ENCODE measurements at regions of chr1 and their contacts with region 1.

Region 1: GRCh38 chr1:113978863-113979702 is at the start of gene OLFML3:
- H3K4me3 Mint-ChIP-seq: peak within 1 kb of the TSS; percentile 63
- H3K27ac Mint-ChIP-seq: peak within 1 kb of the TSS; percentile 67
- H3K4me1 Mint-ChIP-seq: peaks cover 76% of the 10 kb centered on the region
- H3K27me3 Mint-ChIP-seq: peaks cover 7% of the 10 kb centered on the region

Region 2: DNA sequence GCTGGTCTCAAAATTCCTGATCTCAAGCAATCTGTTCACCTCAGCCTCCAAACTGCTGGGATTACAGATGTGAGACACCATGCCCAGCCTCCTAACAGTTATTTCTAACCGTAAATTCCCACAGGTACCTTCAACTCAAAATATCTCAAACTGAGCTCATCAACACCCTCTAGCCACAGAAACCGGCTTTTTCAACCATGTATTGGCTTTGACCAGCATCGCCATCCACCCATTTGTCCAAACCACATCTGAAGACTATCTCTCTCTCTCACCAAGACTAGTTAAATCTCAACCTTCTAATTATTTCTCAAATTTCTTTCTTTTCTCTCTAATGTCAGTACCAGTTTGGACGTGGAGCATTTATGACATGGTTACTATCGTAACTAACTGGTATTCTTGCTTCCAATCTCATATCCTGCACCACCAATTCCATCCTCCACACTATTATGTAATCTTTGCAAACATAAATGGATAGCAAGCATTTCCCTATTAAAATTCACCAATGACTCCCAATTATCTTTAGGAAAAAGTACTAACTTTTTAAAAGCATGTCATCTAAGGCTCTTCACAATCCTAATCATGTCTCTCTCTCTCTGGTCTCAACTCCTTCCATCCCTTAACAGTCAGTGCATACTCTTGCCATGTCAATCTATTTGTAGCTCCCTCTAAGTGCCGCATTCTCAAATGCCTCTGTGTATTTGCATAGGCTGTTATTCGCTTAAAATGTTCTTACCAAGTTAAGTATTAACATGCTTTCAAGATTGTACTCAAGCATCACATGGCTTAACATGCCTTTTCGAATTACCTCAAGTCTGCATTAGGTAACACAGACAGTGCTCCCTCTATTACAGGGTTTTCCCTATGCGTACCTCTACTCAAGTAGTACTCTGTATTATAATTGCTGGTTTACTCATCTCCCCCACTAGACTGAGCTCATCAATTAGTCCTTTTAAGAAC is 184.9 kb before region 1 on chr1:
- intact Hi-C with region 1: no loop called
- H3K4me3 Mint-ChIP-seq: no peak overlapping the region
- H3K27ac Mint-ChIP-seq: no peak overlapping the region
- H3K4me1 Mint-ChIP-seq: peaks cover 42% of the 10 kb centered on the region
- H3K27me3 Mint-ChIP-seq: no peaks in the 10 kb centered on the region

Region 3: DNA sequence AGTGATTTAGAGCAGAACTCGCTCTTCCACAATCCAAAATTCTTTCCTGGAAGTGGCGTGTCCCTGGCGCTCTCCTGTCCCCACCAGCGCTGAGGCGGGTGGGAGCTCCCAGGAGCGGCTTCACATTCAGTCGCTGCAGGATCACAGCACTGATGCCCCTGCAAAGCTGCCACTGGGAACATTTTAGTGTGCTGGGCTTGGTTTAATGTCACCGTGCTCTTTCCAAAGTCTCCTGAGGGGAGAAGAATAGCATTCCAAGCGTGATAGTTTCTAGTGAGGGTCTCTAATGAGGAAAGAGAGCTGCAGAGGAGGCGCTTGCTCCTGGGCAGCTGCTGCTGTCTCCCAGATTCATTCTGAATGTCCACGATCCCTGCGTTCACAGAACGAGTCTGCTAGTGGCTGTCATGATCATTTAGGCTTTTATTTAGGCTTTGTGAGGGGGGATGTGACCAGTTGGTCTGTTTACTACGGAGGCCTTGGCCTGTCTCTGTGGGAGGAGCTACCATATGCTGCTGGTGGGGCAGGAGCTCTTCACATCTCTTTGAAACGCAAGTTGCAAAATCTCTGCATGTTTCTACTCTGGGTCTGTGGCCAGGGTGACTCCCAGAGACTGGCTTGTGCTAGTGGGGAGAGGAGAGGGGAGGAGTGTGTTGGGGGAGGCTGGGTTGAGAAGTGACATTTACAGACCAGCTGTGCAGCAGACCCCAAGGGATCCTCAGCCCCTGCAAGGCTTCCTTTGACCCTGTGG is 23.6 kb after region 1 on chr1:
- intact Hi-C with region 1: no loop called
- H3K4me3 Mint-ChIP-seq: no peak overlapping the region
- H3K27ac Mint-ChIP-seq: no peak overlapping the region
- H3K4me1 Mint-ChIP-seq: peaks cover 24% of the 10 kb centered on the region
- H3K27me3 Mint-ChIP-seq: peaks cover 11% of the 10 kb centered on the region

Region 4: GRCh38 chr1:114081437-114082303 is 102.6 kb after region 1 on chr1:
- intact Hi-C with region 1: loop called (anchors 5 kb)
- H3K4me3 Mint-ChIP-seq: no peak overlapping the region
- H3K27ac Mint-ChIP-seq: peak overlapping the region; percentile 68
- H3K4me1 Mint-ChIP-seq: peaks cover 50% of the 10 kb centered on the region
- H3K27me3 Mint-ChIP-seq: no peaks in the 10 kb centered on the region

Region 5: GRCh38 chr1:114219172-114219868 is 240.2 kb after region 1 on chr1:
- intact Hi-C with region 1: loop called (anchors 5 kb)
- H3K4me3 Mint-ChIP-seq: no peak overlapping the region
- H3K27ac Mint-ChIP-seq: no peak overlapping the region
- H3K4me1 Mint-ChIP-seq: peaks cover 8% of the 10 kb centered on the region
- H3K27me3 Mint-ChIP-seq: peaks cover 5% of the 10 kb centered on the region

Region 6: GRCh38 chr1:114282751-114283403 is 303.8 kb after region 1 on chr1:
- intact Hi-C with region 1: loop called (anchors 1 kb)
- H3K4me3 Mint-ChIP-seq: no peak overlapping the region
- H3K27ac Mint-ChIP-seq: no peak overlapping the region
- H3K4me1 Mint-ChIP-seq: no peaks in the 10 kb centered on the region
- H3K27me3 Mint-ChIP-seq: peaks cover 2% of the 10 kb centered on the region

Region 7: GRCh38 chr1:114428083-114428749 is 449.1 kb after region 1 on chr1:
- intact Hi-C with region 1: loop called (anchors 10 kb)
- H3K4me3 Mint-ChIP-seq: no peak overlapping the region
- H3K27ac Mint-ChIP-seq: no peak overlapping the region
- H3K4me1 Mint-ChIP-seq: no peaks in the 10 kb centered on the region
- H3K27me3 Mint-ChIP-seq: no peaks in the 10 kb centered on the region

Measured in dendritic cell treated with granulocyte-macrophage colony-stimulating factor and Interleukin-4, amounts not matched to agents 40 ng/mL and 50 ng/mL, for 4 days (primary cell).